Activated CD4-positive, alpha-beta T cell treated with anti-CD3 and anti-CD28 coated beads for 36 hours (primary cell): ENCODE measurements at regions of chr3 and their contacts with region 1.

Region 1: GRCh38 chr3:57169872-57170623 is 4.9 kb upstream of the IL17RD start:
- DNase-seq: peak; percentile 85
- ATAC-seq: peak; percentile 86
- H3K4me3 Mint-ChIP-seq: peak overlapping the region; percentile 55
- H3K27ac Mint-ChIP-seq: no peak overlapping the region
- H3K4me1 Mint-ChIP-seq: peaks cover 4% of the 10 kb centered on the region
- H3K27me3 Mint-ChIP-seq: peaks cover 42% of the 10 kb centered on the region

Region 2: DNA sequence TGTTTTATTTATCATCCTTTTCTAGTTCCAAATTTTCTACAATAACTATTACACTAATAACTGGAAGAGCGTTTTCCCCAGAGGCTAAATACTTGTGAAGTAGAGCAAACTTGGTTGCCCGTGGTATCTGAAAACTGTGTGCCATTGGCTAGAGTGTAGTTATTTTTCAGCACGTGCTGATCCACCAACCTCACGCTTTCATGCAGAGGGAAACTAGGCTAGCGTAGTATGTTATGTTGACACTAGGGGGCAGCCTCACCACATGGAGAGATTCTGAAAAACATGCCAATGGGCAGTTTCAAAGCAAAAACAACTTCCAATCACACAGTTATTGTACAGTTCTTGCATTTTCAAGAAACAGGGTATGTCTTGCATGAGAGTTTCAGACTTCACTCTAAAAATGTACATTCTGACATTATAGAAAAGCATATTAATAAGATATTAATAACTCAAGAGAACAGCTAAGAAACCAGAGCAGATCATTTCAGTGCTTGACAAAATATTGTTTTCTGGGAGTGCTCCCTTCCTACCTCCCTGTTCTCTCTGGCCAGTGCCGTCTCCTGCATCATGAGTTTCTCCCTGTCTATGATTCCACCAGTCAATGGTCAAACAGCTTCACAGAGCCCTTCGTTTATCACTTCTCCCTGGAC is 69.9 kb before region 1 on chr3:
- CTCF ChIA-PET with region 1: interaction called, 18 read pairs
- POLR2A ChIA-PET with region 1: no interaction called
- intact Hi-C with region 1: loop called in 1 of 2 experiments (anchors 1 kb)
- DNase-seq: peak; percentile 81
- ATAC-seq: peak; percentile 94
- H3K4me3 Mint-ChIP-seq: no peak overlapping the region
- H3K27ac Mint-ChIP-seq: no peak overlapping the region
- H3K4me1 Mint-ChIP-seq: peaks cover 3% of the 10 kb centered on the region
- H3K27me3 Mint-ChIP-seq: peaks cover 2% of the 10 kb centered on the region

Region 3: DNA sequence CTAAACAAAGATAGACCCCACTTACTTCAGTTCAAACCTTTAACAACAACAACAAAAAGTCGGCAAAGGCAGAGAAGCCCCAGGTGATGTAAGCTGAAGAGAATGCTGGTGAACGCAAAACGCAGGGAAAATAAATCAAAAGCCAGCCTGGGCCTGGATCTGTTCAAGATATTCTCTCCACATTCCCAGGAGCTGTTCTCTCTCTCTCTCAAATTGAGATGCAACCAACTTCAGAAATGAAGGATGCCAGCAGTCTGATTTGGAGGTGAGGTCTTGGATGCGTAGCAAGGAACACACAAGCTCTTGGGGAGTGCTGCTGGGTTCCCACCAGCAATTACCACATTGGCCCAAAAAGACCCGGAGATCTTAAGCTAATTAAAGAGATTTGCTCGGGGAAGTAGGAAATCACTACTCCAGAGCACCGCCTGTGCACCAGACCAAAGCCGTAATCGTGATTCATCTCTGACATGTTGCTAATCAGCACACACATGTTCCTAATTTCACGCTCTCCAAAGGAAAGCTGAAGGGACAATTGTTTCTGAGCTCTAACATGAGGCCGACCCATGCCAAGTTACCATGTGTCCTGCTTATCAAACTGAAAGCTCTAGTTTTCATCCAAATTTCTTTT is 42.0 kb before region 1 on chr3:
- CTCF ChIA-PET with region 1: no interaction called
- POLR2A ChIA-PET with region 1: no interaction called
- intact Hi-C with region 1: no loop called
- DNase-seq: no peak
- ATAC-seq: no peak
- H3K4me3 Mint-ChIP-seq: no peak overlapping the region
- H3K27ac Mint-ChIP-seq: no peak overlapping the region
- H3K4me1 Mint-ChIP-seq: peaks cover 4% of the 10 kb centered on the region
- H3K27me3 Mint-ChIP-seq: peaks cover 1% of the 10 kb centered on the region

Region 4: GRCh38 chr3:57158813-57159738 is 11.0 kb before region 1 on chr3:
- CTCF ChIA-PET with region 1: interaction called, 18 read pairs
- POLR2A ChIA-PET with region 1: no interaction called
- intact Hi-C with region 1: no loop called
- DNase-seq: no peak
- ATAC-seq: no peak
- H3K4me3 Mint-ChIP-seq: no peak overlapping the region
- H3K27ac Mint-ChIP-seq: no peak overlapping the region
- H3K4me1 Mint-ChIP-seq: peaks cover 11% of the 10 kb centered on the region
- H3K27me3 Mint-ChIP-seq: peaks cover 39% of the 10 kb centered on the region

Region 5: DNA sequence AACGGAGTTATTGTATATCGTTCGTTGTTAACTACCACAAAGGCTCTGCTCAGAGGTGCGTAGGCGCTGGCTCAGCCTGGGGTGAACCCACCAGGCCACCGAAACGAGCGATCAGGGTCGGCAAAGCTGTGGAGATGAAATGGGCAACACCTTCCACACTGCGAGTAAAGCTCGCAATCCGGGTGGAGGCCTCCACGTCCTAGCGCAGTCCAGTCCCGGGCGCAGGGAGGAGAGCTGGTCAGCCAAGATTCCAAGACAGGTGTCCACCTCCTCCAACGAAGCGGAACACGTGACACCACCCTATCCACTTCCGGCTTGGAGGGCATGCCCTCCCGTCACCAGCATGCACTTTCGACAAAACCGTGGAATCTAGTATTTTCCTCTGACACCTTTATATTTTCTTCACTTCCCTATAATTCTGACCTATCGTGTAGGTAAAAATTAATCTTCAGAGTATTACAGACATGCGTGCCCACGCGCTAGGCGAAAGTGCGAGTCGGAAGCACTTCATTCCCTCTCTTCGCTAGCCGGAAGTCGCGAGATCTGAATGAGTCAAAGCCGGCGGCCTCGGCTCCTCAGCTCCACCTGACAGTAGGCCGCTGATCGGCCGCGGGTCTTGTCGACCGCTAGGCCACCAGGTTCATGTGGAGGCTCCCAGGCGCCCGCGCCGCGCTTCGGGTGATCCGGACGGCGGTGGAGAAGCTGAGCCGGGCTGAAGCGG is 385.9 kb after region 1 on chr3 and contains the start of gene PDE12:
- CTCF ChIA-PET with region 1: no interaction called
- POLR2A ChIA-PET with region 1: no interaction called
- intact Hi-C with region 1: loop called in 1 of 2 experiments (anchors 10 kb)
- DNase-seq: peak; percentile 91
- ATAC-seq: peak; percentile 82
- H3K4me3 Mint-ChIP-seq: peak within 1 kb of the TSS; percentile 91
- H3K27ac Mint-ChIP-seq: peak within 1 kb of the TSS; percentile 100
- H3K4me1 Mint-ChIP-seq: peaks cover 29% of the 10 kb centered on the region
- H3K27me3 Mint-ChIP-seq: no peaks in the 10 kb centered on the region
- total RNA-seq, gene PDE12: 19.2 to 19.9 TPM

Region 6: DNA sequence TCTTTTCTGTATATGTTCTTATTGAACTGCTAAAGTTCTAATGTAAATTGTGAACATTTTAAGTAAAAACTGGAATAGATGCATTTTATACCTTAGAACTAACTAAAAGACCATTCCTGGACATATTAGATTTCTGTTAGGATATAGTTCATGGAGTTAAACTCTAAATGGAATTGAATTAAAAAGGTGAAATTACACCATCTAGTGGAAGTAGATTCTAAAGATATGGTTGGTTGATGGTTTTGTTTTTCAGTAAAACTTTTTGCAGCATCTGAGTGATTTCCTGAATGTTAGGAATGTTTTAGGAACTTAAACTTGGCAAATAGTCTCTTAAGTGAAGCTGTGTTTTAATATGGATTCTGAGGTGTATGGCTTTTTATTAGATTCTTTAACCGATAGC is 682.8 kb after region 1 on chr3:
- CTCF ChIA-PET with region 1: no interaction called
- POLR2A ChIA-PET with region 1: no interaction called
- intact Hi-C with region 1: loop called in 1 of 2 experiments (anchors 10 kb)
- DNase-seq: no peak
- ATAC-seq: no peak
- H3K4me3 Mint-ChIP-seq: no peak overlapping the region
- H3K27ac Mint-ChIP-seq: no peak overlapping the region
- H3K4me1 Mint-ChIP-seq: no peaks in the 10 kb centered on the region
- H3K27me3 Mint-ChIP-seq: no peaks in the 10 kb centered on the region

Region 7: DNA sequence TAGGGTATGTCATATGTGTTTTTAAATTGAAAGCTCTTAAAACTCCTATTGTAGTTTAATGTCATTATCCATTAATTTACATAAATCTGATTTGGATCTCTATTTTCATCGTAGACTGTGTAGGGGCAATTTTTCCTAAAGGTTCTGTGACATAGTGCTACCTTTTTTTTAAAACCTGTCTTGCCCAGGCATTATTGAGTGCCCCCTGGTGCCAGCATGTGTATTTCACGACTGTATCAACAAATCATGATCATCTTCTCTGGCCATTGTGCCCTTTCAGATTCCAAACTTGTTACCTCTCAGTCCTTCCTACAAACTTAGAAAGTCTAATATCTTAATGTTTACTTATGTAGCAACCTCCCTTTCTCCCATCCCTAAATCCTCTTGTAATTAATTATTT is 740.9 kb after region 1 on chr3:
- CTCF ChIA-PET with region 1: no interaction called
- POLR2A ChIA-PET with region 1: no interaction called
- intact Hi-C with region 1: no loop called
- DNase-seq: peak; percentile 43
- ATAC-seq: peak; percentile 39
- H3K4me3 Mint-ChIP-seq: no peak overlapping the region
- H3K27ac Mint-ChIP-seq: no peak overlapping the region
- H3K4me1 Mint-ChIP-seq: no peaks in the 10 kb centered on the region
- H3K27me3 Mint-ChIP-seq: no peaks in the 10 kb centered on the region